Activated CD4-positive, alpha-beta memory T cell treated with anti-CD3 and anti-CD28 coated beads, Interleukin-2, amount 10 ng/mL, durations not matched to agents 7 days and 5 days (primary cell): ENCODE measurements at regions of chr10 and their contacts with region 1.

Region 1: DNA sequence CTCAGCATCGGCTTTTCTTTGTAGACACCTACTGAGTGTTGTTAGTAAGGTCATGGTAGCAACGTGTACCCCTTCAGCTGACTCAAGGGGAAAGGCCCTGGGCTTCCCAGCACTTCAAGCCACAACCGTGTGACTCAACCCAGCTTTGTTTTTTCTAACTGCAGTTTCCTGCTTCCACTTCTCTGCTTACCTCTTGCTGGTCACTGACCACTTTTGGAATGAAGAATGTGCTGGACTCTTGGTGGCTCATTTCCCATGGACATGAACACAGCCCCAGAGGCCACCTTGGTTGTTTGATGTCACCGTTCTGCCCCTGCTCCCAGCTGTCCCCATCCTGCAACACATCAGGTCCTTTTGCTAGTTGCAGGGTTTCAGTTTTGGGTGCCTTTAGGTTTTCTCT is 69.5 kb upstream of the ZNF438 start:
- DNase-seq: peak; percentile 76
- H3K4me3 Mint-ChIP-seq: peak overlapping the region; percentile 33
- H3K27ac Mint-ChIP-seq: peak overlapping the region; percentile 82
- H3K4me1 Mint-ChIP-seq: peaks cover 41% of the 10 kb centered on the region
- H3K27me3 Mint-ChIP-seq: no peaks in the 10 kb centered on the region

Region 2: DNA sequence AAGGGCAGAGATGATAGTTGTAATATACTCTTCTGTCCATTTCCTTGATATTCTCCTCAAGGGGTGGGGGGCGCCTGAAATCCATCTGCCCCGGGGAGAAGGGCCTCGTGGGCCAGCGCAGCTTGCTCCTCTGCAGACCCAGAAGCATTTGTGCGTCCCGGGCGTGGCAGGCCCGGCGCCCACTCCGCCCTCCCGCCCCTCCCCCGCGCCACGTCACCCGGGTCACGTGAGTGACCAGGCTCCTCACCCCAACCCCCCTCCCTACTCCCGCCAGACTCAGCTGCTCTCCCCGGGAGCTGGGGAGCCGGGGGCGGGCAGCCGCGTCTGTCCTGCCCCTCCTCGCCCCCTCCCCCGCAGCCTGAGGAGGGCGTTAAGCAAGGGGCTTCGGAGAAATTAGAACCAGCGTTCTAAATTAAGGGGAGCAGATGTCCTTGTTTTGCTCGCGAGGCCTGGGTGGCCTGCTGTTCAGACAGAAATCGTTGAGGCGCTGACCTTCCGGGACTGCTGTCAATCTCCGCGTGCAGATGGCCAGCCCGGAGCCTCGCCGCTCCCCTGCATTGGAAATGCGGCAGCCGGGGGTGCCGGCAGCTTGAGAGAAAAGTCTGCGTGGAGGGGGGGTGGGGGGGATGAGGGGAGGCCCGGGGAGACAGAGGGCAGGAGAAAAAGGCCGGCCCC is 32.6 kb after region 1 on chr10:
- CTCF ChIA-PET with region 1: interaction called, 3 read pairs
- POLR2A ChIA-PET with region 1: interaction called, 15 read pairs
- DNase-seq: peak; percentile 78
- H3K4me3 Mint-ChIP-seq: peak overlapping the region; percentile 73
- H3K27ac Mint-ChIP-seq: peak overlapping the region; percentile 68
- H3K4me1 Mint-ChIP-seq: peaks cover 45% of the 10 kb centered on the region
- H3K27me3 Mint-ChIP-seq: no peaks in the 10 kb centered on the region

Region 3: DNA sequence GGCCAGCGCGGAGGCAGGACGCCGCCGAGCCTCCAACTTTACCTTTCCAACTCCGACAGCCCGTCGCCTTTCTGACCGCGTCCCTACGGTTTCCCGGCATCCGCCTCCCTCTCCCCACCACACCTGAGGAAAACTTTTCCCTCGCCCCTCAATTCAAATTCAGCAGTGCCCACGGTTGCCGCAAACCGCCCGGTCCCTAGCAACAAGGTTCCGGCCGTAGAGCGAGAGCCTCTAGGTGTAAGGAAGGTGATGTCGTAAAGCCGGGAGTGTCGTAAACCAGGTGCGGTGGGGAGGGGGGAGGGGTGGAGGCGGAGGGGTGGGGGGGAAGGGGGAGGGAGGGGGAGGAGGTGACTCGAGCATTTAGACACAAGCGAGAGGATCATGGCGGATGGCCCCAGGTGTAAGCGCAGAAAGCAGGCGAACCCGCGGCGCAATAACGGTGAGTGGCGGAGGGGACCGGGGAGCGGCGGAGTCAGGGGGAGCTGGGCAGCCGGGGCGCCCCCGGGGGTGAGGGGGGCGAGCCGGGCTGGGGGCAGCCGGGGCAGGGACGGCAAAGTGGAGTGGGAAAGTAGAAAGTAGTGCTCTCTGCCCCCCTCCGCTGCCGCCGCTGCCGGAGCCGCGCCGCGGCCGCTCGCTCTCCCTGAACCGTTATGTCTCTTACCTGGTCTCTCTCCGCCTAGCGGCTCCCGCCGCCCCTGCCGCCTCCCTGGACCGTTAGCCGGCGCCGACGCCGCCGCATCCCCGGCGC is 217.9 kb after region 1 on chr10 and contains the start of gene ZEB1:
- CTCF ChIA-PET with region 1: no interaction called
- POLR2A ChIA-PET with region 1: interaction called, 12 read pairs
- DNase-seq: peak; percentile 93
- H3K4me3 Mint-ChIP-seq: peak within 1 kb of the TSS; percentile 93
- H3K27ac Mint-ChIP-seq: peak within 1 kb of the TSS; percentile 97
- H3K4me1 Mint-ChIP-seq: peaks cover 49% of the 10 kb centered on the region
- H3K27me3 Mint-ChIP-seq: no peaks in the 10 kb centered on the region
- total RNA-seq, gene ZEB1: 50.4 to 51.6 TPM